ENCODE measurements at regions of chr13 and their contacts with region 1.

Region 1: GRCh38 chr13:95403828-95404522 is 102.7 kb upstream of the ABCC4 start:
- DNase-seq: peak; percentile 45 to 85 (median 67)
- ATAC-seq: peak; percentile 81 to 94 (median 93)
- H3K4me3 ChIP-seq: peak overlapping the region; percentile 39 to 59
- H3K4me3 Mint-ChIP-seq: peak overlapping the region; percentile 74 to 86 (median 82)
- H3K27ac ChIP-seq: no peak overlapping the region
- H3K27ac Mint-ChIP-seq: peak overlapping the region in 1 of 2 donors; percentile 50
- H3K4me1 ChIP-seq: peaks cover 0 to 7% of the 10 kb centered on the region in 2 experiments
- H3K4me1 Mint-ChIP-seq: peaks cover 8 to 11% (median 10%) of the 10 kb centered on the region in 3 donors
- H3K27me3 ChIP-seq: peaks cover 0 to 20% of the 10 kb centered on the region in 2 experiments
- H3K27me3 Mint-ChIP-seq: peaks cover 5 to 7% of the 10 kb centered on the region in 2 donors

Region 2: DNA sequence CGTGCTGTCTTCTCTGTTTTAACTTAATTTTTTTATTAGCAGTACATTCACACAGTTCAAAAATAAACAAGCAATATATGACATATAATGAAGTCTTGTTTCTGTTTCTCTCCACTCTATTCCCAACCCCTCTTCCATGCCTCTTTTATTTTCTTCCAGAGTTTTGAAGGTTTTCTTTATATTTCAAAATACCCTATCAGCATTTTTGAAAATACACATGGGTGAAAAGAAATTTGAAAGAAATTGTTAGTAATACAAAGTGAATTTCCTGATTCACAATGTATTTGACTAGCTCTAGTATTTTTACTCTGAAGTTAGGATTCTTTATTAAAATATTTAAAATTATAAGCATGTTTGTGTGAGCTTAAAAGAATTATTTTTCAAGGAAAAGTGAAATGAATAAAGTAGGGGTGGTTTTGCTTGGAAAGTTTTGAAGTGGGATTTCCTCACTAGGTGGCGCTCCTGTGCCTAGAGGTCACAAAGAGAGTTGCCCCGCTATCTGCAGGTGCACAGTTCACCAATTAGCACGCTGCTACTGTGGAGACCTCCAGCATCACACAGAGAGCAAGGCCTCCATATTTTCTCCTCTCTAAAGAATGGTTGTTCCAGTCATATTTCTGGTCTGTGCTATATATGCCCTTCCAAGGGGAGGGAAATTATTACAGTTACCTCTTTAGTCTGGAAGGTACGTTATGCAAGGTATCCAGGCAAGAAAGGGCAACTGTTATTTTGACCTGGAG is 729.2 kb before region 1 on chr13:
- CTCF ChIA-PET with region 1: interaction called, 6 to 12 read pairs
- POLR2A ChIA-PET with region 1: no interaction called
- DNase-seq: peak in 32 of 35 experiments; percentile 4 to 65 (median 19)
- ATAC-seq: peak in 2 of 4 experiments; percentile 43 to 48
- H3K4me3 ChIP-seq: no peak overlapping the region
- H3K4me3 Mint-ChIP-seq: no peak overlapping the region
- H3K27ac ChIP-seq: no peak overlapping the region
- H3K27ac Mint-ChIP-seq: no peak overlapping the region
- H3K4me1 ChIP-seq: peaks cover 0 to 2% of the 10 kb centered on the region in 2 experiments
- H3K4me1 Mint-ChIP-seq: no peaks in the 10 kb centered on the region
- H3K27me3 ChIP-seq: peaks cover 2 to 6% of the 10 kb centered on the region in 2 experiments
- H3K27me3 Mint-ChIP-seq: peaks cover 24 to 30% of the 10 kb centered on the region in 2 donors

Region 3: GRCh38 chr13:95181586-95181985 is 222.4 kb before region 1 on chr13:
- CTCF ChIA-PET with region 1: interaction called, 3 to 12 read pairs
- POLR2A ChIA-PET with region 1: no interaction called
- DNase-seq: no peak
- ATAC-seq: no peak
- H3K4me3 ChIP-seq: no peak overlapping the region
- H3K4me3 Mint-ChIP-seq: no peak overlapping the region
- H3K27ac ChIP-seq: no peak overlapping the region
- H3K27ac Mint-ChIP-seq: peak overlapping the region; percentile 33 to 68
- H3K4me1 ChIP-seq: peaks cover 35 to 47% of the 10 kb centered on the region in 2 experiments
- H3K4me1 Mint-ChIP-seq: peaks cover 69 to 80% (median 72%) of the 10 kb centered on the region in 3 donors
- H3K27me3 ChIP-seq: no peaks in the 10 kb centered on the region
- H3K27me3 Mint-ChIP-seq: no peaks in the 10 kb centered on the region

Region 4: GRCh38 chr13:95191821-95192563 is 212.0 kb before region 1 on chr13:
- CTCF ChIA-PET with region 1: interaction called, 57 to 178 read pairs
- POLR2A ChIA-PET with region 1: interaction called in 1 of 2 experiments, 9 read pairs
- DNase-seq: peak; percentile 1 to 67 (median 37)
- ATAC-seq: peak; percentile 58 to 76 (median 70)
- H3K4me3 ChIP-seq: no peak overlapping the region
- H3K4me3 Mint-ChIP-seq: no peak overlapping the region
- H3K27ac ChIP-seq: no peak overlapping the region
- H3K27ac Mint-ChIP-seq: peak overlapping the region in 1 of 2 donors; percentile 8
- H3K4me1 ChIP-seq: no peaks in the 10 kb centered on the region
- H3K4me1 Mint-ChIP-seq: peaks cover 5 to 16% (median 5%) of the 10 kb centered on the region in 3 donors
- H3K27me3 ChIP-seq: no peaks in the 10 kb centered on the region
- H3K27me3 Mint-ChIP-seq: no peaks in the 10 kb centered on the region

Region 5: DNA sequence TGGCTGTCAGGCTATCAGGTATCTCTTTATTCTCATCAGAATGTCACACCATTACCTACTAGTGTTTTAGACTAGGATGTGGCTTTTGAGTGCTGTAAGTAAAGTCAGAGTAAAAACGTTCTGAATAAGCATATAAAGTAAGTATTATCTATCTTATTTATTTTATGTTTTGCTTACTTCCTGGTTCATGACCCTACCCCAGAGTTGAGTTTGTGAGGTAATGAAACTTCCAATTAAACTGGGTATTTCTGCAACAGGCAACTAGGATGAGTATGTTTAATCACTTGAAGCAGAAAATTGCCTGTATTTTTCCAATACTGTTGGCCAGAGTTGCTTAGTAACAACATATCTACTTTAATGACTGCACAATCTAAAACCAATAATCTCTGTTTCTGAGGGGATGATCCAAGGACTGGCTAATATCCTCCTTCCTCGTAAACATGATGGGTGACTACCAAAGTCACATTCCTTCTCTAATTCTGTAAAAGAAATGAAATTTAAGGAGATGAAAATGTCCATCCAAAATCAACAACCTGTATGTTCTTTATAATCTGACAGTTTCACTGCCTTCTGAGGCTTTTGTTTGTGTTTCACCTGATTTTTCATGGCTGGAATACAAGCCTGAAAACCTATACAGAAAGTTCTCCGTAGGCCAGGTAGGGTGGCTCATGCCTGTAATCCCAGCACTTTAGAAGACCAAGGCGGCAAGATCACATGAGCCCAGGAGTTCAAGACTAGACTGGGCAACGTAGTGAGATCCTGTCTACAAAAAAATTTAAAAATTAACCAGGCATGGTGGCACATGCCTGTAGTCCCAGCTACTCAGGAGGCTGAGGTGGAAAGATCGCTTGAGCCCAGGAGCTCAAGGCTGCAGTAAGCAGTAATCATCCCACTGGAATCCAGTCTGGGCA is 185.8 kb before region 1 on chr13:
- CTCF ChIA-PET with region 1: interaction called in 1 of 2 experiments, 10 read pairs
- POLR2A ChIA-PET with region 1: no interaction called
- DNase-seq: no peak
- ATAC-seq: no peak
- H3K4me3 ChIP-seq: no peak overlapping the region
- H3K4me3 Mint-ChIP-seq: no peak overlapping the region
- H3K27ac ChIP-seq: no peak overlapping the region
- H3K27ac Mint-ChIP-seq: no peak overlapping the region
- H3K4me1 ChIP-seq: no peaks in the 10 kb centered on the region
- H3K4me1 Mint-ChIP-seq: no peaks in the 10 kb centered on the region
- H3K27me3 ChIP-seq: no peaks in the 10 kb centered on the region
- H3K27me3 Mint-ChIP-seq: no peaks in the 10 kb centered on the region

Region 6: DNA sequence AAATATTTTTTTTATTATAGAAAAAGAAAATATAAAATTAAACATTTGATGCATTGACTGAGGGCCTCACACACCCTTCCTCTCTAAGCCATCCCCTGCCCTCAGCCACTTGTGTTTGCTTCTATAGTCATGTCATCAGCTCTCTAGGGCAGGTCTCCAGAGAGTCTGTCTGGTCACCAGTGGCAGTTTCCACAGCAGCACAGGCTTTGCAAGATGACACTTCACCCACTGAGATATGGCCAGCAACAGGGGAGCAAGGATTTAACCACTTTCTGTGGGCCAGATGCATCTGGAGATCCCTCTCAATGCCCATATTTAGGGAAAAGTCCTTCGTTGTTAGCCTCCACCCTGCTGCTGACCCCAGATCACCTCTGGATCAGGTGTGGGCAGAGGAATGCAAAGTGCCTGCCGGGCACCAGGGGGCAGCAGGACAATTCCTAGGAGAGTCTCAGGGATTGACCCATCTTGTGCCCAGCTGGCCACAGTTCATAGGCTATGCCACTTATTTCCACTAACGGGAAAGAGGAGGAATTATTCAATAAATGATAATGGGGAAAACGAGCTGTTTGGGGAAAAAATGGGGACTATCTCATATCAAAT is 107.5 kb before region 1 on chr13:
- CTCF ChIA-PET with region 1: interaction called, 4 to 13 read pairs
- POLR2A ChIA-PET with region 1: no interaction called
- DNase-seq: peak in 6 of 35 experiments; percentile 3 to 33 (median 16)
- ATAC-seq: no peak
- H3K4me3 ChIP-seq: no peak overlapping the region
- H3K4me3 Mint-ChIP-seq: no peak overlapping the region
- H3K27ac ChIP-seq: no peak overlapping the region
- H3K27ac Mint-ChIP-seq: no peak overlapping the region
- H3K4me1 ChIP-seq: peaks cover 2 to 8% of the 10 kb centered on the region in 2 experiments
- H3K4me1 Mint-ChIP-seq: peaks cover 22 to 33% (median 24%) of the 10 kb centered on the region in 3 donors
- H3K27me3 ChIP-seq: no peaks in the 10 kb centered on the region
- H3K27me3 Mint-ChIP-seq: no peaks in the 10 kb centered on the region

Region 7: GRCh38 chr13:95378603-95379002 is 25.4 kb before region 1 on chr13:
- CTCF ChIA-PET with region 1: interaction called, 3 to 10 read pairs
- POLR2A ChIA-PET with region 1: no interaction called
- DNase-seq: no peak
- ATAC-seq: no peak
- H3K4me3 ChIP-seq: no peak overlapping the region
- H3K4me3 Mint-ChIP-seq: no peak overlapping the region
- H3K27ac ChIP-seq: no peak overlapping the region
- H3K27ac Mint-ChIP-seq: no peak overlapping the region
- H3K4me1 ChIP-seq: peaks cover 0 to 6% of the 10 kb centered on the region in 2 experiments
- H3K4me1 Mint-ChIP-seq: peaks cover 0 to 5% (median 3%) of the 10 kb centered on the region in 3 donors
- H3K27me3 ChIP-seq: no peaks in the 10 kb centered on the region
- H3K27me3 Mint-ChIP-seq: peaks cover 0 to 13% of the 10 kb centered on the region in 2 donors